Activated CD4-positive, alpha-beta T cell treated with anti-CD3 and anti-CD28 coated beads, Interleukin-2, amount 10 ng/mL, durations not matched to agents 24 days and 14 days (primary cell): ENCODE measurements at regions of chr7 and their contacts with region 1.

Region 1: DNA sequence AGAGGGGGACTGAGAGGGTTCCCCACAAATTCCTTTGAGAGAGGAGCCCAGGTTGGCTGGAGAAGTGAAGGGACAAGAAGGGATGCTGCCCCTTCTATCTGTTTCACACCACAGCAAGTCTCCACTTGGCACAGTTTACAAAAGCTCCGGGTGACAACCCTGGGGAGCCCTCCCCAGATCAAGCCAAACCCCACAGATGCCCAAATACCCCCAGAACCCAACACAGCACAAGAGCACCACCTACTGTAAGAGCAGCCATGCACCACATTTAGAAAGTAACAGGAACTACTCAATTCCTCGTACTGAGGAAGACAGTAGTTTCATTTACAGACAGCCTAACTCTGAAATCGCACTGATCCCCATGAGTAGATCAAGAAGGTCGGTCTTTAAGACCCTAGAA is 67.8 kb upstream of the ATP6V0A4 start:
- DNase-seq: peak; percentile 88
- H3K4me3 Mint-ChIP-seq: no peak overlapping the region
- H3K27ac Mint-ChIP-seq: no peak overlapping the region
- H3K4me1 Mint-ChIP-seq: peaks cover 14% of the 10 kb centered on the region
- H3K27me3 Mint-ChIP-seq: peaks cover 2% of the 10 kb centered on the region

Region 2: GRCh38 chr7:138161600-138162081 is 704.2 kb before region 1 on chr7:
- intact Hi-C with region 1: loop called (anchors 1 kb)
- DNase-seq: peak; percentile 92
- H3K4me3 Mint-ChIP-seq: no peak overlapping the region
- H3K27ac Mint-ChIP-seq: no peak overlapping the region
- H3K4me1 Mint-ChIP-seq: no peaks in the 10 kb centered on the region
- H3K27me3 Mint-ChIP-seq: peaks cover 2% of the 10 kb centered on the region

Region 3: DNA sequence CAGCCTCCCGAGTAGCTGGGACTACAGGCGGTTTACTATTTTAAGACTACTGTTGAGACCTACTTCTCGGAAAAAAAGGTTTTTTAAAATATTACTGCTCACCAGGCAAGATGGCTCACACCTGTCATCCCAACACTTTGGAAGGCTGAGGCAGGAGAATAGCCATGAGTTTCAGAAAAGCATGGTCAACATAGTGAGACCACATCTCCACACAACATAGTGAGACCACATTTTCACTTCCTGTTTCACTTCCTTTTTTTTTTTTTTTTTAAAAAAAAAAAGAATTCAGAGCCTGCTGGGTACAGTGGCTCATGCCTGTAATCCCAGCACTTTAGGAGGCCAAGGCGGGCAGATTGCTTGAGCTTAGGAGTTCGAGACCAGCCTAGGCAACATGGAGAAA is 211.2 kb before region 1 on chr7:
- intact Hi-C with region 1: no loop called
- DNase-seq: no peak
- H3K4me3 Mint-ChIP-seq: no peak overlapping the region
- H3K27ac Mint-ChIP-seq: no peak overlapping the region
- H3K4me1 Mint-ChIP-seq: no peaks in the 10 kb centered on the region
- H3K27me3 Mint-ChIP-seq: no peaks in the 10 kb centered on the region

Region 4: GRCh38 chr7:139218173-139218572 is 352.3 kb after region 1 on chr7:
- intact Hi-C with region 1: no loop called
- DNase-seq: no peak
- H3K4me3 Mint-ChIP-seq: no peak overlapping the region
- H3K27ac Mint-ChIP-seq: no peak overlapping the region
- H3K4me1 Mint-ChIP-seq: no peaks in the 10 kb centered on the region
- H3K27me3 Mint-ChIP-seq: peaks cover 14% of the 10 kb centered on the region